ENCODE measurements at regions of chr20 and their contacts with region 1.

Region 1: GRCh38 chr20:53692413-53693067 is 98.9 kb upstream of the ZNF217 start:
- DNase-seq: peak; percentile 24
- ATAC-seq: peak; percentile 30
- H3K4me3 Mint-ChIP-seq: peak overlapping the region; percentile 39
- H3K27ac Mint-ChIP-seq: no peak overlapping the region
- H3K4me1 Mint-ChIP-seq: peaks cover 31% of the 10 kb centered on the region
- H3K27me3 Mint-ChIP-seq: no peaks in the 10 kb centered on the region

Region 2: DNA sequence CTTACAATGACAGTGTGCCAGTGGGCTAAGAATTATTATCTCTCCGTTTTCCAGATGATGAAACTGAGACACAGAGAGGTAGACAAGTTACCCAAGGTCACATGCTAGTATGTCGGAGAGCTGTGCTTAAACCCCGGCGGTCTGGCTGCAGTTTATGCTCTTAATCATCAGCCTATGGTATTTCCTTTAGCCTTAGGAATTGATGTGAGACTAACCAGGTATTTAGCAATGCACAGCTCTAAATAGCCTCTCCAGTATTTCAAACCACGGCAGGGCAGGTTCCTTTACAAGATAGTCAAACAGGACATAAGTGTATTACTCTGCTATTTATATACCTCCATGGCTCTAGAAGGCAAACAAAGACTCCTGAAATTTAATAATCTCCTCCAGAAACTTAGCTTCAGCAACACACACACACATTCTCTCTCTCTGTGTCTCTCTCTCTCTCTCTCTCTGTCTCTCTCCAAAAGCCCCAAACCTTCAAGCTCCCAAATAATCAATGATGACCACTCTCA is 43.1 kb after region 1 on chr20:
- CTCF ChIA-PET with region 1: no interaction called
- POLR2A ChIA-PET with region 1: interaction called, 10 read pairs
- intact Hi-C with region 1: no loop called
- DNase-seq: no peak
- ATAC-seq: no peak
- H3K4me3 Mint-ChIP-seq: no peak overlapping the region
- H3K27ac Mint-ChIP-seq: peak overlapping the region; percentile 62
- H3K4me1 Mint-ChIP-seq: peaks cover 40% of the 10 kb centered on the region
- H3K27me3 Mint-ChIP-seq: no peaks in the 10 kb centered on the region

Region 3: GRCh38 chr20:54017809-54018208 is 325.3 kb after region 1 on chr20:
- CTCF ChIA-PET with region 1: no interaction called
- POLR2A ChIA-PET with region 1: no interaction called
- intact Hi-C with region 1: no loop called
- DNase-seq: no peak
- ATAC-seq: no peak
- H3K4me3 Mint-ChIP-seq: no peak overlapping the region
- H3K27ac Mint-ChIP-seq: no peak overlapping the region
- H3K4me1 Mint-ChIP-seq: peaks cover 5% of the 10 kb centered on the region
- H3K27me3 Mint-ChIP-seq: peaks cover 6% of the 10 kb centered on the region

Region 4: GRCh38 chr20:54525916-54526590 is 833.5 kb after region 1 on chr20:
- CTCF ChIA-PET with region 1: no interaction called
- POLR2A ChIA-PET with region 1: no interaction called
- intact Hi-C with region 1: no loop called
- DNase-seq: no peak
- ATAC-seq: no peak
- H3K4me3 Mint-ChIP-seq: no peak overlapping the region
- H3K27ac Mint-ChIP-seq: no peak overlapping the region
- H3K4me1 Mint-ChIP-seq: no peaks in the 10 kb centered on the region
- H3K27me3 Mint-ChIP-seq: peaks cover 11% of the 10 kb centered on the region